ENCODE measurements at regions of chr4 and their contacts with region 1.

Region 1: DNA sequence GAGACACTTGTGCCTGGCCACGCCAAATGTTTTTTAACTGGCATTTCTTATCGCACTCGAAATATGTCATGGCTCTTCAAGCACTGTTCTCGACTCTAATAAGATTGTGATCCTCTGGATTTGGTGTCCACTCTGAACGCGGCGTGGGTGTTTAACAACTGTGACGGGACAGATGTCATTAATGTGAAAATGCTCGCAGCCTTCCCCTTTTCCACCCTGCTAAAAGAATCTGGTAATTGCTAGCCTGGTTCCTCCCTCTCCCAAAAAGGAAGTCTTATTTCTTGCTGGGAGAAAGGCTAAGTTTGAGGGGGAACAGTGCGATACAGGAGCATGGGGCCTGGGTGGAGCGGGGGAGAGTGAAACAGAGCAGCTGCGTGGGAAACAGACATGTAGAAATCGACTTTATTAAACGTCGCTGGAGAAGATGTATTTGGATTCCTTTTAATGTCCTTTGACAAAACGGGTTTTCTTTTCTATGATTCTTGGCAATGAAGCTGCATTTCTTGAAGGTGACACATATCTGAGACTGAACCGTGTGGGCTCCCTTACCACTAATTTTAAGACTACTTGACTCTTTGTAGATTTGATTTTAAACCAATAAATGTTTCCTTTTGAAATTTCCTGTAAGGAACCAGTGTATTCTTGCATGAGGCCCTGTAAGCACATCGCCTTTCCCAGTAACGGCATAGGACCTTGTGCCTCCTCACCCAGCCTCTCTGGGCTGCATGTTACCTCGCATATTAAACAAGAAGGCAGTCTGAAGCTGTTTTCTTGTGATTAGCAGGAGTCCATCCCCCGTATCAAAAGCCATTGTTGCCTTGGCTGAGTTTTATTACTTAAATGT is 17.8 kb downstream of the TBC1D1 start:
- DNase-seq: peak in 2 of 3 donors; percentile 30 to 63
- ATAC-seq: peak; percentile 65 to 68
- H3K4me3 ChIP-seq: peak overlapping the region; percentile 25
- H3K27ac ChIP-seq: peak overlapping the region; percentile 86
- H3K4me1 ChIP-seq: peaks cover 4% of the 10 kb centered on the region
- H3K27me3 ChIP-seq: no peaks in the 10 kb centered on the region

Region 2: DNA sequence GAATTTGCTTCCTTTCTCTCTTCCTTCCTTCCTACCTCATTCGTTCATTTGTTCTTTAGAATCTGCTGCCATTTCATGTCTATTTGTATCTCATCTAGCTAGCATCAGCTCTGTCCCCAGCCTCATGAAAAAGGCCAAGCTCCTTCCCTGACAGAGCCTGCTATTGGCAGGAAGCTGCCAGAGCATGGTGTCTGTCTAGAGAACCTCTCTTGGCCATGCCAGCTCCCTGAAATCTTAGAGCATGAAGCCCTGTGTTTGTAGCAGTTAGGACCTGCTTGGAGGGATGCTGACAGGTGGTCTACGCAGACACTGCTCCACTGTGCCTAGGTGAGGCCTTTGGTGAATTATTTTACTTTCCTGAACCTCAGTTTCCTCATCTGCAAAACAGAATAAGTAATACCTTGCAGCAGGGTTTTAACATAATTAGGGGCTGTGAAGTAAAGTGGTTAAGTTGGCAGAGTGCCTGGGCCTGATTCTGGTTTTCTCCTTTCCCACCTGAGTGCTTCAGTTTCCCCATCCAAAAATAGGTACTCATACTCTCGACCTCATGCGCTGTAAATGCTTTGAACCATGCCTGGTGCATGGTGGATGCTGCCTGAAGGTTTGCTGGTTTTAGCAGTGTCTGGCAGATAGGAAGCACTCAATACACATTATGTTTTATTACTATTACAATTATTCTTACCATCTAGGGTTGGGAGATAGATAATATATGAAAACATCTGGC is 56.2 kb after region 1 on chr4:
- intact Hi-C with region 1: loop called in 1 of 4 experiments (anchors 10 kb)
- DNase-seq: no peak
- ATAC-seq: no peak
- H3K4me3 ChIP-seq: no peak overlapping the region
- H3K27ac ChIP-seq: no peak overlapping the region
- H3K4me1 ChIP-seq: peaks cover 6% of the 10 kb centered on the region
- H3K27me3 ChIP-seq: no peaks in the 10 kb centered on the region

Region 3: GRCh38 chr4:38046728-38047489 is 138.2 kb after region 1 on chr4:
- intact Hi-C with region 1: no loop called
- DNase-seq: no peak
- ATAC-seq: no peak
- H3K4me3 ChIP-seq: no peak overlapping the region
- H3K27ac ChIP-seq: no peak overlapping the region
- H3K4me1 ChIP-seq: peaks cover 3% of the 10 kb centered on the region
- H3K27me3 ChIP-seq: no peaks in the 10 kb centered on the region